Panc1 (cell line): ENCODE measurements at regions of chr15 and their contacts with region 1.

Region 1: GRCh38 chr15:25408428-25408827 is 30.4 kb downstream of the UBE3A start:
- DNase-seq: no peak
- ATAC-seq: no peak
- H3K4me3 ChIP-seq: no peak overlapping the region
- H3K27ac ChIP-seq: no peak overlapping the region
- H3K4me1 ChIP-seq: peaks cover 5% of the 10 kb centered on the region; the same call in 1 of the 2 replicates
- H3K27me3 ChIP-seq: no peaks in the 10 kb centered on the region
- CTCF ChIP-seq: no peak

Region 2: DNA sequence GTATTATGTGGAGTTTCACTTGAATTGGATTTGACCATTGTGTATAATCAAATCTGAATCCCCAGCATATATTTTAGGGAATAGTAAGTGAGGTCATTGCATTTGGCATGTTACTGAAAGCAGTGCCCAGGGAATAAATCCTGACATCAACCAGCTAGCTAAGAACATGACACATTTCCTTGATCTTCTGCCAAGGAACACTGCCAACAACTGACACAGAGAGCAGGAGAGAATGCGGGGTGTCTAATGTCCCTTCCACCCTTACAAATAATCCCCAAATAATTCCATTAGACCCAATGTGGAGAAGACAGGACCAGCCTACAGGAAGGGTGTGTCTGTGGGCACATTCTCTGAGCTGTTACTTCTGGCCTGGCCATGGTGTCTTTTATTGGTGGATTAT is 60.9 kb after region 1 on chr15:
- CTCF ChIA-PET with region 1: no interaction called
- POLR2A ChIA-PET with region 1: no interaction called
- in situ Hi-C with region 1: no loop called
- intact Hi-C with region 1: loop called (anchors 10 kb)
- DNase-seq: no peak
- ATAC-seq: no peak
- H3K4me3 ChIP-seq: no peak overlapping the region
- H3K27ac ChIP-seq: no peak overlapping the region
- H3K4me1 ChIP-seq: no peaks in the 10 kb centered on the region
- H3K27me3 ChIP-seq: no peaks in the 10 kb centered on the region
- CTCF ChIP-seq: no peak

Region 3: GRCh38 chr15:25497934-25498333 is 89.5 kb after region 1 on chr15:
- CTCF ChIA-PET with region 1: no interaction called
- POLR2A ChIA-PET with region 1: no interaction called
- in situ Hi-C with region 1: no loop called
- intact Hi-C with region 1: no loop called
- DNase-seq: no peak
- ATAC-seq: no peak
- H3K4me3 ChIP-seq: no peak overlapping the region
- H3K27ac ChIP-seq: no peak overlapping the region
- H3K4me1 ChIP-seq: no peaks in the 10 kb centered on the region
- H3K27me3 ChIP-seq: no peaks in the 10 kb centered on the region
- CTCF ChIP-seq: no peak